ENCODE measurements at regions of chr16 and their contacts with region 1.

Region 1: DNA sequence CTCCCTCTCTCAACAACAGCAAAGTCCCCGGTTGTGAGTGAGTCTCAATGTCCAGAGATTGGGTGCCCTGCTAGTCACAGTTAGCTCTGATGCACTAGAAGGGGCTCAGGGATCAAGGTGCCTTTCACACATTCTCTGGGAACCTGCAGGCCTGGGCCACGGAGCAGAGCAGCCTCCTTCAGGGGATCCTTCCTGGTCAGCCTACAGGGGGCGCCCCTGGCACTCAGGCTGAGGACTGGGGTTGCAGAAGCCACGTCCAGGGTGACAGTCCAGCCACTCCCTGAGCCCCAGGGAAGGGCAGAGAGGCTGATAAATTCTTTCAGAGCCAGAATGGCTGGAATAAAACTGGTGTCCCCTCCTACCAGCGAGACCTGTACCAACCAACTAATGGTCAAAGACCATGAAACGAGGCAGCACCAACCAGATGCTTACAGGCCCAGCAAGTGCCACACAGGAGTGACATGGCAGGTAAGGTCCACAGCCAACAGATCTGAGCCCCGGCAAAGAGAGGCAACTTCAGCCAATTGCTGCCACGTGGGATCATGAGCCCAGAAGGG is 43.5 kb downstream of the ST3GAL2 start:
- DNase-seq: peak in 6 of 10 donors; percentile 40 to 90 (median 50)

Region 2: DNA sequence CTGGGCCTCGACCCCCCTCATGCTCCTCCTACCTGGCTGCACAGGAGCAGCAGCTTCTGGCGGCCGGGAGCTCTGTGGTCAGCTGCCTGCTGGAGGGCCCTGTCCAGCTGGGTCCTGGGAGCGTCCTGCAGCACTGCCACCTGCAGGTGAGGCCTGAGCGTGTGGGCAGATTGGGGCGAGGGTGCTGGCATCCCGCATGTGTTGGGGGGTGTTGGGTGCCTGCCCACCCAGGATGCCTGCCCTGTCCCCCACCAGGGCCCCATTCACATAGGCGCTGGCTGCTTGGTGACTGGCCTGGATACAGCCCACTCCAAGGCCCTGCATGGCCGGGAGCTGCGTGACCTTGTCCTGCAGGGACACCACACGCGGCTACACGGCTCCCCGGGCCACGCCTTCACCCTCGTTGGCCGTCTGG is 75.5 kb after region 1 on chr16:
- intact Hi-C with region 1: loop called (anchors 2 kb)
- DNase-seq: peak in 4 of 10 donors; percentile 26 to 86 (median 56)